Activated CD8-positive, alpha-beta T cell treated with anti-CD3 and anti-CD28 coated beads for 36 hours (primary cell): ENCODE measurements at regions of chr22 and their contacts with region 1.

Region 1: GRCh38 chr22:23376256-23376655 is 195.9 kb downstream of the BCR start:
- DNase-seq: peak; percentile 74
- ATAC-seq: peak; percentile 94
- H3K4me3 Mint-ChIP-seq: no peak overlapping the region
- H3K27ac Mint-ChIP-seq: no peak overlapping the region
- H3K4me1 Mint-ChIP-seq: no peaks in the 10 kb centered on the region
- H3K27me3 Mint-ChIP-seq: no peaks in the 10 kb centered on the region
- CTCF ChIP-seq: no peak

Region 2: DNA sequence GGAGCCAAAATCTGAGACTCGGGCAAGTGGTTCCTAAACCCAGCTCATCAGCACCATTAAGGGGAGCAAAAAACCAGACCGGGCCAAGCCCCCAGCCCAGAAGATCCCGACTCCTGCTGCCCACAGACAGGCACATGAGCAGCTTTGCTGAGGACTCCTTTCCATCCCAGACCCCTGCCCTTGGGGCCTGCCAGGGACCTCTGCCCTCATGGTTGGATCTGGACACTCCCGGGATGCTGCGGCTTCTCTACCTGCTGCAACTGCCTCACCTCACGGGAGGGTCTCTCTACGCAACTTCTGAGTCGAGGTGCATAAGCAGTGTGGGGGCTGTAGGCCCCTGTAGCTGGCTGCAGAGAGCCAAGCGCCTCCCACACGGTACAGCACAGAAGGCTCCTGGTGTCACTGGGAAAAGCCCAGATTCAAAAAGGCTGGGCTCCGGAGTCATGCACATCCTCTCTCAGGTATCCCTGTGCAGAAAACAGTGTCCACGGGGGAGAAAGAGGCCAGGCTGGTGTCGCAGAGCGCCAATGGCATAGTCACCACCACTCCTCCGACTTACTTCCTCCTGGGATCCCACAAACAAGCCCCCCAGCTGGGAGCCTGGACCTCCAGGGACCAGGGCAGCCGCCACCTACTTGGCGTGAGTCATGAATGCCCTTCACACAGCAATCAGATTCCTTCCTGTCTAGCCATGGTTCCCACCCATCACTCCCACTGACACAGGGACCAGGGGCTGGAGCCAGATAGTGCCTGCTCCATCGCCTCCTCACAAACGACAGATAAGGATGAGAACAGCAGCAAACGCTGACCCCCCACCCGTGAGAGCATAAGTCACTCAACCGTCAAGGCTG is 73.9 kb before region 1 on chr22:
- CTCF ChIA-PET with region 1: no interaction called
- POLR2A ChIA-PET with region 1: no interaction called
- intact Hi-C with region 1: no loop called
- DNase-seq: no peak
- ATAC-seq: no peak
- H3K4me3 Mint-ChIP-seq: no peak overlapping the region
- H3K27ac Mint-ChIP-seq: no peak overlapping the region
- H3K4me1 Mint-ChIP-seq: no peaks in the 10 kb centered on the region
- H3K27me3 Mint-ChIP-seq: no peaks in the 10 kb centered on the region
- CTCF ChIP-seq: no peak

Region 3: GRCh38 chr22:23315341-23315917 is 60.8 kb before region 1 on chr22:
- CTCF ChIA-PET with region 1: no interaction called
- POLR2A ChIA-PET with region 1: no interaction called
- intact Hi-C with region 1: loop called (anchors 5 kb)
- DNase-seq: peak; percentile 77
- ATAC-seq: no peak
- H3K4me3 Mint-ChIP-seq: no peak overlapping the region
- H3K27ac Mint-ChIP-seq: peak overlapping the region; percentile 20
- H3K4me1 Mint-ChIP-seq: peaks cover 9% of the 10 kb centered on the region
- H3K27me3 Mint-ChIP-seq: no peaks in the 10 kb centered on the region
- CTCF ChIP-seq: peak; percentile 86

Region 4: DNA sequence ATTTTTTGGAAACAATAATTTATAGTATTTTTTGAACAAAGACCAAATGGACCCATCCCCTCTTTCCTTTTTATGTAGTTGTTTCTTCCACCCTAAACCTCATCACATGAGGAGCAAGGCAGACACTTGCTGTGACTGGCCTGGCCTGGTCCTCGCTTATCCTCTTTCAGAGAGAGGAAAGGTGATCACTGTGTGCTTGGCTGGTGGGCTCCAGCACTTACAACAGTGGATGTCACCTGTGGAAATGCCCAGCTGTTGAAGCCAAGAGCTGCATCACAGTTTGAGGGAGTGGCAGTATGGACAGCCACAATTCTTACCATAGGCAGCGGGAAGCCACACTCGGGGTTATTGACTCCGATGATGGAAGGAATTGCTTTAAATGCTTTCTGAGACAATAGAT is 10.3 kb before region 1 on chr22:
- CTCF ChIA-PET with region 1: interaction called, 13 read pairs
- POLR2A ChIA-PET with region 1: no interaction called
- intact Hi-C with region 1: no loop called
- DNase-seq: no peak
- ATAC-seq: no peak
- H3K4me3 Mint-ChIP-seq: no peak overlapping the region
- H3K27ac Mint-ChIP-seq: no peak overlapping the region
- H3K4me1 Mint-ChIP-seq: no peaks in the 10 kb centered on the region
- H3K27me3 Mint-ChIP-seq: peaks cover 5% of the 10 kb centered on the region
- CTCF ChIP-seq: no peak